Activated T-helper 1 cell treated with anti-CD3 and anti-CD28 coated beads, Interleukin-12 subunit alpha, Interleukin-12 subunit beta, Interleukin-2, Interleukin-4 antibody, amounts not matched to agents 30 ng/mL and 10 ng/mL and 1 ng/mL, durations not matched to agents 14 hours and 24 hours and 36 hours (primary cell): ENCODE measurements at regions of chr11 and their contacts with region 1.

Region 1: DNA sequence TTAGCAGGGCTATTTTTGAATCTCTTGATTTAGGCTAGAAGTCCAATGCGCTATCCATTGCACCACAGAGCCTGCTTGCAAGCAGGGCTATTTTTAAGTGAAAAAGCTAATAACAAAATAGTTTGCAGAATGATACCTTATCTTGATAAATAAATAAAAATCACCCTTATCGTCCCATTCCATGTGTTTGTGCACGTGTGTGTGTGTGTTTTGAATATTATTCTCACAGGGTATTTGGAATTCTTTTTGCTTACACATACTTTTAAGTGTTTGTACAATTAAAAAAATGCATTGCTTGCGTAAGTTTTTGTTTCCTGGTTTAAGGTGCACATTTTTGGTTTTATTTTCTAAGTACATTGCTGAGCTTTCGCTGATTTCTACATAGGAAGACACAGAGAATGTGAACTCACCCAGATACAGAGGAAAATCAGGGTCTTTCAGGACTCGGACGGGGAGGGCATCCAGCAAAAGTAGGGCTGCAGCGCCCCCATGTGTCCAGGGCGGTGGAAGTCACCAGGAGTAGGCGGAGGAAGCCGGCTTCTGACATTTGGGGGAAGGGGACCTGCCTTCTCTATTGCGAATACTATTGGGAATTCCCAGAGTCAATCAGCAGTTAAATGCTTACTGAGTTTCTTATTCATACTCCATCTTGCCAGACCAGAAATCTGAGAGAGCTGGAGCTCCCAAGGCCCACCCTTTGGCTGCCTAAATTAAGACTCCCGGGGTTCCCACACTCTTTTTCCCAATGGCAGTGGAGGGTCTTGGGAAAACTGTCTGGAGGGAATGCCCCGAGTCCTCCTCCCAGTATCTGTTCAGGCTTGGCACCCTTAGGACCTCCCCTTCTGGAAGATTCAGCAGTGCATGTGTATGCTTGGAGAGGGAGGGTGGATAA is 27.2 kb downstream of the SLC1A2 start:
- DNase-seq: peak; percentile 61
- H3K4me3 Mint-ChIP-seq: no peak overlapping the region
- H3K27ac Mint-ChIP-seq: no peak overlapping the region
- H3K4me1 Mint-ChIP-seq: peaks cover 26% of the 10 kb centered on the region
- H3K27me3 Mint-ChIP-seq: peaks cover 14% of the 10 kb centered on the region

Region 2: DNA sequence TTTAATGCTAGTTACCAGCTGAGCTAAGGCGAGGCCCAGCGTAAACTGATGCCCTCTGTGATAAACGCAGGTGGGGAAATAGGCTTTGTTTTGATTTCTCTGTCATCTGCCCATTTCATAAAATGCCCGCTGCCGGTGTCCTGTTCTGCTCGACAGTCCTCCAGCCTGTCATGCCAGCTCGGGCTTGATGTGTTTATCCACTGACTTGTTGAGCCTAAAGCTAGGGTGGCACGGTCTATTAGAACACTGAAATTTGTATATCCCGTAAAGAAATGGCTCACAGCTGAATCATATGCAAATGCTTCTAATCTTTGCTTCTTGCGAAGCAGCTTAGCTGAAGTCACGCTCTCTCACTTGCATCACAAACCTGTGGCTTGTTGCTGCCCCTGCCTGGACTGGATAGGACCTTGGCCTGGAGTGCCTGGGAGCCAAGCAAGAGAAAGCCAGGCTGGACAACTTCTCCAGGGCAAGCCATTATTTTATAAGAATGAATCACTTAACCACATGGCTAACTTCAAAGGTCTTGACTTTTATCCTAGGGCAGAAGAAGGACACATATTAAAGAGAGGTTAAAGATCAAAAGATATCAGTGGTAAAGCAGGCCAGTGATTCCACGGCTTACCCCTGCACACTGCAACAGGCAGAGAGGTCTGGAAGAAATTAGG is 738.2 kb before region 1 on chr11:
- intact Hi-C with region 1: loop called (anchors 2 kb)
- DNase-seq: no peak
- H3K4me3 Mint-ChIP-seq: no peak overlapping the region
- H3K27ac Mint-ChIP-seq: no peak overlapping the region
- H3K4me1 Mint-ChIP-seq: peaks cover 21% of the 10 kb centered on the region
- H3K27me3 Mint-ChIP-seq: peaks cover 66% of the 10 kb centered on the region

Region 3: DNA sequence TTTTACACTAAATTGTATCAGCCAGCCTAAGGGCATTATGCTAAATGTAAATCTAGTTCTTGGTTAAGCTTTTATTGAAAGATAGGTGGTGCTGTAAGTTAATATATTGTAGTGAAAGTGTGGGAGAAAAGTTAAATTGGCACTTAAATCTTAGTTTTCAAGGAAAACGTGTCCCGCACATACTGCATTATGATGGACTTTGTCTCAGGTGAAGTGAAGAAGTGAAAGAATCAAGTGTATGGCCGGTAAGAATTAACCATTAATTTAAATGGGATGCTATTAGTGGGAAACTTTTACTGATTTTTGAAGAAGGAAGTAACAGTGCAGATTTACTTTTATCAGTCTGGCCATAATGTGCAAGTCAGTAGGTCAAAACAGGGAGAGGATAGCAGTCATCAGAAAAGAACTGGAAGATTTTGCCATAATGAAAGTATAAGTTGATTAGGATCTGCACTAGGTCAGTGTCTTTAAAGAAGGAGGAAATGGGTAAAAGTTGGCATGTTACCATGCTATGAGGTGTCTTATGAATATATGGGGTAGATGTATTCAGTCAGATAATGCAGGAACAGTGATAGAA is 394.1 kb before region 1 on chr11:
- intact Hi-C with region 1: loop called (anchors 1 kb)
- DNase-seq: no peak
- H3K4me3 Mint-ChIP-seq: no peak overlapping the region
- H3K27ac Mint-ChIP-seq: peak overlapping the region; percentile 16
- H3K4me1 Mint-ChIP-seq: peaks cover 35% of the 10 kb centered on the region
- H3K27me3 Mint-ChIP-seq: no peaks in the 10 kb centered on the region

Region 4: DNA sequence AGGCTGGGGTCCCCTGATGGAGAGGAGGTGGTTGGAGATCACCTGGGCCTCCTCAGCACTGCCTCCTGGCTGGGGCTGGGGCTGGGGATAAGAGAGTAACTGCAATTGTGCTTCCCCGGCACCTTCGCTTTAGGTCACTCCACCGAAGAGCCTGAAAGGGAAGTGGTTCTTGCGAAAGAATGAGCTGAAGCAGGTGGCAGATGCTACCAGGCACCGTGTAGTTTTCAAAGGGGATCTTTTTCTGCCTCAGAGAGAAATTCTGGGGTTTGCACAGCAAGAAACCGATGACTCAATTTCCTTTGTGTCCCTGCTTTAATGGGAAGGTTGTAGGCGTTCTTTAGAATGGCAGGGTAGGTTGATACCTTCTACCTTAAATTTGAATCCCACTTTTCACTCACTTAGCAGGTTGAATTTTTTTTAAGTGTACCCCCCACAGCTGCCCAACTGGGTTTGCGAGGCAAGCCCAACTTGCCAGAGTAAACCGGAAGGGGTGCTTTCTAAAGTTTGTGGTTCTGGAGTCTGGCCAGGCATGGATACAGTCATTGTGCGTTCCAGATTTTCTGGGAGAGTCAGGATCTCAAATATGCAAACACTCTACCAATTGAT is 247.9 kb before region 1 on chr11:
- intact Hi-C with region 1: loop called (anchors 1 kb)
- DNase-seq: peak; percentile 69
- H3K4me3 Mint-ChIP-seq: peak overlapping the region; percentile 97
- H3K27ac Mint-ChIP-seq: peak overlapping the region; percentile 93
- H3K4me1 Mint-ChIP-seq: peaks cover 84% of the 10 kb centered on the region
- H3K27me3 Mint-ChIP-seq: no peaks in the 10 kb centered on the region

Region 5: GRCh38 chr11:35237860-35238715 is 154.1 kb before region 1 on chr11:
- intact Hi-C with region 1: loop called (anchors 1 kb)
- DNase-seq: peak; percentile 48
- H3K4me3 Mint-ChIP-seq: peak overlapping the region; percentile 42
- H3K27ac Mint-ChIP-seq: peak overlapping the region; percentile 36
- H3K4me1 Mint-ChIP-seq: peaks cover 67% of the 10 kb centered on the region
- H3K27me3 Mint-ChIP-seq: no peaks in the 10 kb centered on the region

Region 6: GRCh38 chr11:35343033-35343598 is 49.1 kb before region 1 on chr11:
- intact Hi-C with region 1: loop called (anchors 1 kb)
- DNase-seq: peak; percentile 65
- H3K4me3 Mint-ChIP-seq: peak overlapping the region; percentile 27
- H3K27ac Mint-ChIP-seq: peak overlapping the region; percentile 79
- H3K4me1 Mint-ChIP-seq: peaks cover 46% of the 10 kb centered on the region
- H3K27me3 Mint-ChIP-seq: peaks cover 9% of the 10 kb centered on the region

Region 7: GRCh38 chr11:35541621-35542375 is 149.6 kb after region 1 on chr11:
- intact Hi-C with region 1: no loop called
- DNase-seq: no peak
- H3K4me3 Mint-ChIP-seq: no peak overlapping the region
- H3K27ac Mint-ChIP-seq: no peak overlapping the region
- H3K4me1 Mint-ChIP-seq: no peaks in the 10 kb centered on the region
- H3K27me3 Mint-ChIP-seq: peaks cover 2% of the 10 kb centered on the region